Adrenal gland (tissue), 19 donors: ENCODE measurements at regions of chr12 and their contacts with region 1.

Region 1: GRCh38 chr12:6662906-6663742 is at the start of gene ING4:
- DNase-seq: peak; percentile 96 to 100 (median 99)
- H3K4me3 ChIP-seq: peak within 1 kb of the TSS in 3 of 4 donors; percentile 58 to 77 (median 60)
- H3K27ac ChIP-seq: peak within 1 kb of the TSS; percentile 31 to 76 (median 53)
- H3K4me1 ChIP-seq: peaks cover 6 to 12% of the 10 kb centered on the region in 2 donors
- H3K27me3 ChIP-seq: no peaks in the 10 kb centered on the region
- CTCF ChIP-seq: peak in 1 of 6 experiments; percentile 3
- POLR2A ChIP-seq: peak in 1 of 2 donors; percentile 40
- total RNA-seq, gene ING4: 22.6 to 87.6 (median 54.1) TPM

Region 2: GRCh38 chr12:6507102-6507998 is 155.8 kb before region 1 on chr12:
- intact Hi-C with region 1: no loop called
- DNase-seq: no peak
- H3K4me3 ChIP-seq: no peak overlapping the region
- H3K27ac ChIP-seq: no peak overlapping the region
- H3K4me1 ChIP-seq: no peaks in the 10 kb centered on the region
- H3K27me3 ChIP-seq: no peaks in the 10 kb centered on the region
- CTCF ChIP-seq: no peak
- POLR2A ChIP-seq: no peak

Region 3: DNA sequence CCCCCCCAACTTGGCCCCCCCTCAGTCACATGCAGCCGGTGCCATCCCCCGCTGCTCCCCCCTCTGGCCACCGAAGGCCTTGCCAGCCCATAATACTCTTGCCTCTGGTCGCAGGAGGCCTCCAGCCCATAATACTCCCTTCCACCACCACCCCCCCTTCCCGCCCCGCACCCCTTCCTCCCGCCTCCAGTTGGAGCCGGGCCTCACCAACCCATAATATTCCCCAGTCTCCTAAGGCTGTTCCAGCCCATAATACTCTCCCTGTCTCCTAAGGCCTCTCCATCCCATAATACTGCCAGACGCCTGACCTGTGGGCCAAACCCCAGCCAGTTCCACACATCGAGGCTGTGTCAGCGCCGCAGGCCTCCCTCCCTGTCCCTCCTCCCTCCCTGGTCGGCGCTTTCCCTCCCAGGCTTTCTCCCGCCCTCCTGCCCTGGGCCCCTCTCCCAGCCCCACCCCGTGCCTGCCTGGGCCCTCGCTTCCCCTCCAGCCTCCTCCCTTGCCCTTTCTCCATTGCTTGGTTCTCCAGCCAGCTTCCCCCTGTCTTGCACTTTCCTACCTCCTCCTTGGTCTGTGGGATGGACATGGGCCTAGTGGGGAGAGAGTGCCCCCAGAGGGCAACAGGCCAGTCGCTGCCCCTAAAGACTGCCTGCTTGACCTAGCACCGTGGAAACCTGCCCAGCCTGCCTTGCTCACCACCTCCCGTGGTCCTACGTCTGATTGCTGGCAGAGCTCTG is 49.2 kb before region 1 on chr12:
- intact Hi-C with region 1: loop called in 1 of 2 experiments (anchors 10 kb)
- DNase-seq: peak; percentile 93 to 98 (median 96)
- H3K4me3 ChIP-seq: no peak overlapping the region
- H3K27ac ChIP-seq: peak overlapping the region; percentile 75 to 95 (median 80)
- H3K4me1 ChIP-seq: peaks cover 24 to 27% of the 10 kb centered on the region in 2 donors
- H3K27me3 ChIP-seq: no peaks in the 10 kb centered on the region
- CTCF ChIP-seq: peak in 3 of 6 experiments; percentile 17 to 23 (median 23)
- POLR2A ChIP-seq: peak in 1 of 2 donors; percentile 58

Region 4: DNA sequence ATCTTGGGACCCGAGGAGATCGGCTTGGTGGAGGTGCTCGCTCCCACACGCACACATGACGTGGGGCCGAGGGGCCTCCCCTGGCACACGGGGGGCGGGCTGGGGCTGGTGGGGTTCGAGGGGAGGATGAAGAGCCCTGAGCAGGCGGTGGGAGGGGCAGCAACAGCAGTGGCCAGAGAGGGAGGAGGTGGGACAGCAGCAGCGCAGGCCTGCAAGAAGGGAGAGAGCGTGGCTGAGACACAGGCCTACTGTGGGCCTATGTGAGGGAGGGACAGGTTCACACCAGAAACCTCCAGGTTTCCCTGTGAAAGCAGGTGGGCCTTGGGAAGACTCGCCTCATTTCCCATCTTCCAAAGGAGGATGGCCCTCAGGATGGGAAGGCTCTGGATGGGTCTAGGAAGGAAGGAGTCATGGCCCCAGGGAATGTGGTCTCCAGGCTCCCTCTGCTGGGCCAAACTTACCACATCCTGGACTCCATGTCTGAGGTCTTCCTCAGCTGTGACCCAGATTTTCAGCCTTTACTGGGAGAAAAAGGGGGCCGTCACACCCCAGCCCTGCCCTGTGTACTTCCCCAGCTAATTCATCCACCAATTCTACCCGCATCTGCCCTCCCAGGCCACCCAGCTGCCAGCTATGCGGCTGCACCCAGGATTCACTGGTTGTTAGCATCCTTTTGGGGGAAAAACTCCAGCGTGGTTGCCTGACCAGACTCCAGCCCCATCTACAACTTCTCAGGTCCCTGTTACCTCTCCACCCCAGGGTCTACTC is 34.6 kb after region 1 on chr12:
- intact Hi-C with region 1: loop called in 1 of 2 experiments (anchors 5 kb)
- DNase-seq: peak in 5 of 7 donors; percentile 26 to 73 (median 59)
- H3K4me3 ChIP-seq: no peak overlapping the region
- H3K27ac ChIP-seq: no peak overlapping the region
- H3K4me1 ChIP-seq: peaks cover 5 to 9% of the 10 kb centered on the region in 2 donors
- H3K27me3 ChIP-seq: peaks cover 48% of the 10 kb centered on the region
- CTCF ChIP-seq: peak in 5 of 6 experiments; percentile 37 to 49 (median 42)
- POLR2A ChIP-seq: no peak

Region 5: GRCh38 chr12:6792522-6793201 is 129.5 kb after region 1 on chr12:
- intact Hi-C with region 1: no loop called
- DNase-seq: peak in 6 of 7 donors; percentile 23 to 67 (median 44)
- H3K4me3 ChIP-seq: peak overlapping the region in 1 of 4 donors; percentile 29
- H3K27ac ChIP-seq: peak overlapping the region in 1 of 5 donors; percentile 65
- H3K4me1 ChIP-seq: no peaks in the 10 kb centered on the region
- H3K27me3 ChIP-seq: peaks cover 13% of the 10 kb centered on the region
- CTCF ChIP-seq: no peak
- POLR2A ChIP-seq: peak in 1 of 2 donors; percentile 13